ENCODE measurements at regions of chr4 and their contacts with region 1.

Region 1: GRCh38 chr4:93791570-93792195 is 36.9 kb upstream of the ATOH1 start:
- DNase-seq: peak; percentile 56
- H3K4me3 ChIP-seq: no peak overlapping the region
- H3K27ac ChIP-seq: no peak overlapping the region
- H3K4me1 ChIP-seq: no peaks in the 10 kb centered on the region
- CTCF ChIP-seq: peak; percentile 97

Region 2: DNA sequence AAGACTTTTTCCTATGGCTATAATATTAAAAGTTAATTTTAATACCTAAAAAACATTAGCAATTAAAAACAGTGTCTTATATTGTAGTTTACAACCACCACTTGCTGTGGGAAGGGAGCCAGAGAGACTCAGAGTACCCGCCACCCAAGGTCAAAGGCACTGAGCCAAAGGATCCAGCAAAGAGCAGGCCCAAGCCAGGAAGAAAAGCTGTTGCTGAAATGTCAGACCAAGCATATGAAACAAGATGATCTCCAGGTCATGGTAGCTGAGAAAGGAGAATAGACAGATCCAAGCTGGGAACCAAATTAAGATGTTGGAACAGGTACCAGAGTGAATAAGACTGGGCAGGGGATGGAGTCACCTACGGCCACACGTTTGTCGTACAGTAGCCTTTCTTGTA is 18.1 kb after region 1 on chr4:
- CTCF ChIA-PET with region 1: no interaction called
- POLR2A ChIA-PET with region 1: no interaction called
- intact Hi-C with region 1: no loop called
- DNase-seq: no peak
- H3K4me3 ChIP-seq: no peak overlapping the region
- H3K27ac ChIP-seq: no peak overlapping the region
- H3K4me1 ChIP-seq: no peaks in the 10 kb centered on the region
- CTCF ChIP-seq: no peak

Region 3: GRCh38 chr4:94127707-94128328 is 336.1 kb after region 1 on chr4:
- CTCF ChIA-PET with region 1: no interaction called
- POLR2A ChIA-PET with region 1: no interaction called
- intact Hi-C with region 1: loop called (anchors 2 kb)
- DNase-seq: peak; percentile 40
- H3K4me3 ChIP-seq: no peak overlapping the region
- H3K27ac ChIP-seq: no peak overlapping the region
- H3K4me1 ChIP-seq: no peaks in the 10 kb centered on the region
- CTCF ChIP-seq: peak; percentile 88

Region 4: DNA sequence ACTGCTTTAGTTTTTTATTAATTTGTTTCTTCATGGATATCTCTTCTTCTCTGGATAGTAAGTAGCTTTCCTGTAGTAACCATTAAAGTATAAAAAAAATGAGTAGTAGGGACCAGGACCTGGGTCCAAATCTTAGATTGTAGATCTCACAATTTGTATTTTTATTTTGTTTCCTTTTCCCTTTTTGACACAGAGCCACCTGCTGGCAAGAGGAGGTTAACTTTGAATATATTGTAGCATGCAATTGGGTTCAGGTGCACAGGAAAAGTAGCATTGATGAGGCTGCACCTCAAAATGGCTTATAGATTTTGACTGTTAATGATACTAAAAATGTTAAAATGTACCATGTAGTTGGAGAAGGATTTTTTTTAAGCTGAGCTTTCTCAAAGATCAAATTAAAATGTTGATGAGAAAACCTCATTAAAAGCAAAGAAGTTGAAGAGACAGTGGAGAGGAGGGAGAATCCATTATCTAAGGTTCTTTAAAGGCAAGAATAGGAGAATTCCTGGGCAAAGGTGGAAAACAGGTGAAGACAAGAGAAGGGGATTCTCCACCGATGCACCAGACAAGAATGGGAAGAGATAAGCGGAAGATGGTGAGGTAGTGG is 599.2 kb after region 1 on chr4:
- CTCF ChIA-PET with region 1: no interaction called
- POLR2A ChIA-PET with region 1: no interaction called
- intact Hi-C with region 1: loop called (anchors 5 kb)
- DNase-seq: peak; percentile 16
- H3K4me3 ChIP-seq: no peak overlapping the region
- H3K27ac ChIP-seq: no peak overlapping the region
- H3K4me1 ChIP-seq: no peaks in the 10 kb centered on the region
- CTCF ChIP-seq: peak; percentile 81

Region 5: DNA sequence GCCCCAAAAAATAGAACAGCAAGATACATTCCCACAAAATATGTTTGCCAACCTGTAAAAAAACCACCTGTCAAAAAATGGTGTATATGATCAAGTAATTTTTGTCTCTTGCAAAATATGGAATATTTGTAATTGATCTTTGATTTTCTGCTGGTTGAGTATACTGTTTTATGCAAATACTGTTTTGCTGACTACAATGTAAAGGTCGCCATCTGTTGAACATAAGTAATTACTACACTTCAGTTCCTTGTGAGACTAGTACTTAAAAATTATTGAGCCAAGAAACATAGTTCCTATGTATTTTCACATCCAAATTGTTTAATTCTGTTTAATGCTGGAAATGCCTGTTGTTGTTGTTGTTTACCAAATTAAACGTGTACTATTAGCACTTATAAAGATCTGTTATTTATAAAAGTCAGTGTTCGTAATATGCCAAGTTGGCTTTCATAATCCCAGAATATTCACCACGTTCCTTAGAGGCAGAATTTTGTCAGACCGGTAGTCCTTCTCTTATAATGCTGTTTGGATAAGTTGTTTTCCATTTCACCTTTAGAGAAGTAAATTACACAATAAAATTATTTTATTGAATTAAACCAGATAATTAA is 804.3 kb after region 1 on chr4:
- CTCF ChIA-PET with region 1: no interaction called
- POLR2A ChIA-PET with region 1: no interaction called
- intact Hi-C with region 1: loop called (anchors 10 kb)
- DNase-seq: peak; percentile 42
- H3K4me3 ChIP-seq: no peak overlapping the region
- H3K27ac ChIP-seq: no peak overlapping the region
- H3K4me1 ChIP-seq: no peaks in the 10 kb centered on the region
- CTCF ChIP-seq: peak; percentile 87

Measured in OCI-LY7 (cell line).